Gastrocnemius medialis (tissue), 4 donors: ENCODE measurements at regions of chr2 and their contacts with region 1.

Region 1: GRCh38 chr2:178193823-178194599 is at the start of gene OSBPL6:
- DNase-seq: peak; percentile 82 to 88
- ATAC-seq: peak; percentile 86
- H3K4me3 ChIP-seq: peak within 1 kb of the TSS; percentile 76 to 98 (median 84)
- H3K27ac ChIP-seq: peak within 1 kb of the TSS; percentile 92 to 98 (median 94)
- H3K4me1 ChIP-seq: peaks cover 21 to 30% of the 10 kb centered on the region in 2 donors
- H3K27me3 ChIP-seq: no peaks in the 10 kb centered on the region
- CTCF ChIP-seq: peak in 4 of 5 experiments; percentile 52 to 67 (median 62)
- POLR2A ChIP-seq: peak; percentile 88 to 91
- total RNA-seq, gene OSBPL6: 11.6 to 51.1 (median 40.7) TPM

Region 2: GRCh38 chr2:178128836-178129630 is 65.0 kb before region 1 on chr2:
- in situ Hi-C with region 1: no loop called
- intact Hi-C with region 1: loop called (anchors 5 kb)
- DNase-seq: no peak
- ATAC-seq: peak; percentile 64 to 81
- H3K4me3 ChIP-seq: no peak overlapping the region
- H3K27ac ChIP-seq: peak overlapping the region; percentile 25 to 55 (median 44)
- H3K4me1 ChIP-seq: peaks cover 9 to 18% of the 10 kb centered on the region in 2 donors
- H3K27me3 ChIP-seq: no peaks in the 10 kb centered on the region
- CTCF ChIP-seq: no peak
- POLR2A ChIP-seq: no peak

Region 3: GRCh38 chr2:178251151-178251955 is 57.3 kb after region 1 on chr2:
- in situ Hi-C with region 1: no loop called
- intact Hi-C with region 1: loop called (anchors 2 kb)
- DNase-seq: no peak
- ATAC-seq: no peak
- H3K4me3 ChIP-seq: no peak overlapping the region
- H3K27ac ChIP-seq: peak overlapping the region; percentile 30 to 73 (median 49)
- H3K4me1 ChIP-seq: peaks cover 39 to 68% of the 10 kb centered on the region in 2 donors
- H3K27me3 ChIP-seq: no peaks in the 10 kb centered on the region
- CTCF ChIP-seq: no peak
- POLR2A ChIP-seq: no peak

Region 4: DNA sequence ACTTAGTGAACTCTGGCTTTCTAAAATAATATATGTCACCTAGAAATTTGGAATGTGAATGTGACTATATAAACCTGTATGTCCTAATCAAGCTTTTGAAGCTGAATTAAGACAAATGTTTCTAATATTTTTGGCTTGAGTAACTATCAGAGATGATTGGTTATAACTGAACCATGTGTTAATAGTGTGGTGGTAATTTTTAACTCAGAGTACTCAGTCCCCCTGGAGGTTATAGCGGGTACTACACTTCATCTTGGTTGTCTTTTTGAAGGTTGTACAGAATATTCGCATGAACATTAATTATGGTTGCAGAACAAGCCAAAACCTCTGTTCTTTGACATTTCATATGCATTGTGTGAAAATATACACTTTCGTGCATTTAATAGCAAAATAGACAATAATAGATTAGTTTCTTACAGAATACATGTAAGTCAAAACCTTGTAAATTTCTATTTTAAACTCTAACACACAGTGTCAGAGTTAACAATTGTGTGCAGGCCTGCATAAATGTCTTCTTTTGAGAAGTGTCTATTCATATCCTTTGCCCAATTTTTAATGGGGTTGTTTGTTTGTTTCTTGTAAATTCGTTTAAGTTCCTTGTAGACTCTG is 86.3 kb after region 1 on chr2:
- in situ Hi-C with region 1: no loop called
- intact Hi-C with region 1: loop called (anchors 2 kb)
- DNase-seq: no peak
- ATAC-seq: peak in 1 of 2 donors; percentile 55
- H3K4me3 ChIP-seq: no peak overlapping the region
- H3K27ac ChIP-seq: peak overlapping the region in 2 of 4 donors; percentile 29 to 33
- H3K4me1 ChIP-seq: peaks cover 47 to 58% of the 10 kb centered on the region in 2 donors
- H3K27me3 ChIP-seq: no peaks in the 10 kb centered on the region
- CTCF ChIP-seq: peak; percentile 67 to 80 (median 72)
- POLR2A ChIP-seq: no peak

Region 5: GRCh38 chr2:178298785-178299212 is 104.8 kb after region 1 on chr2:
- in situ Hi-C with region 1: no loop called
- intact Hi-C with region 1: loop called (anchors 2 kb)
- DNase-seq: no peak
- ATAC-seq: peak; percentile 43 to 68
- H3K4me3 ChIP-seq: no peak overlapping the region
- H3K27ac ChIP-seq: peak overlapping the region; percentile 55 to 87 (median 70)
- H3K4me1 ChIP-seq: peaks cover 40 to 42% of the 10 kb centered on the region in 2 donors
- H3K27me3 ChIP-seq: no peaks in the 10 kb centered on the region
- CTCF ChIP-seq: no peak
- POLR2A ChIP-seq: no peak

Region 6: GRCh38 chr2:178450774-178451525 is 256.9 kb after region 1 on chr2 and contains the starts of genes PJVK and PRKRA:
- in situ Hi-C with region 1: no loop called
- intact Hi-C with region 1: loop called (anchors 1 kb)
- DNase-seq: peak; percentile 96 to 97
- ATAC-seq: peak; percentile 82 to 84
- H3K4me3 ChIP-seq: peak within 1 kb of the TSS; percentile 69 to 97 (median 90)
- H3K27ac ChIP-seq: peak within 1 kb of the TSS; percentile 88 to 100 (median 98)
- H3K4me1 ChIP-seq: peaks cover 26 to 27% of the 10 kb centered on the region in 2 donors
- H3K27me3 ChIP-seq: no peaks in the 10 kb centered on the region
- CTCF ChIP-seq: peak in 1 of 5 experiments; percentile 17
- POLR2A ChIP-seq: peak; percentile 97
- total RNA-seq, gene PJVK: 0.16 to 3.9 (median 1.0) TPM
- total RNA-seq, gene PRKRA: 91.0 to 125 (median 117) TPM